Common myeloid progenitor, CD34-positive (primary cell): ENCODE measurements at regions of chr17 and their contacts with region 1.

Region 1: GRCh38 chr17:42536048-42536371 is at the start of gene NAGLU:
- DNase-seq: peak; percentile 86 to 91 (median 89)
- H3K4me3 ChIP-seq: peak within 1 kb of the TSS; percentile 70 to 81 (median 72)
- H3K27ac ChIP-seq: peak within 1 kb of the TSS; percentile 34 to 73
- H3K4me1 ChIP-seq: peaks cover 2 to 38% (median 30%) of the 10 kb centered on the region in 4 experiments
- H3K27me3 ChIP-seq: no peaks in the 10 kb centered on the region

Region 2: GRCh38 chr17:42548070-42548837 is 12.2 kb after region 1 on chr17:
- CTCF ChIA-PET with region 1: interaction called, 11 read pairs
- POLR2A ChIA-PET with region 1: no interaction called
- DNase-seq: peak; percentile 72 to 82 (median 74)
- H3K4me3 ChIP-seq: peak overlapping the region in 5 of 7 experiments; percentile 21 to 68 (median 59)
- H3K27ac ChIP-seq: no peak overlapping the region
- H3K4me1 ChIP-seq: peaks cover 0 to 9% (median 5%) of the 10 kb centered on the region in 4 experiments
- H3K27me3 ChIP-seq: no peaks in the 10 kb centered on the region

Region 3: GRCh38 chr17:42704837-42705494 is 169.0 kb after region 1 on chr17:
- CTCF ChIA-PET with region 1: no interaction called
- POLR2A ChIA-PET with region 1: no interaction called
- DNase-seq: no peak
- H3K4me3 ChIP-seq: no peak overlapping the region
- H3K27ac ChIP-seq: no peak overlapping the region
- H3K4me1 ChIP-seq: peaks cover 0 to 16% (median 5%) of the 10 kb centered on the region in 4 experiments
- H3K27me3 ChIP-seq: peaks cover 0 to 39% (median 4%) of the 10 kb centered on the region in 5 experiments

Region 4: GRCh38 chr17:42784811-42785592 is 249.0 kb after region 1 on chr17:
- CTCF ChIA-PET with region 1: no interaction called
- POLR2A ChIA-PET with region 1: no interaction called
- DNase-seq: peak in 2 of 3 donors; percentile 28 to 42
- H3K4me3 ChIP-seq: no peak overlapping the region
- H3K27ac ChIP-seq: no peak overlapping the region
- H3K4me1 ChIP-seq: peaks cover 0 to 36% (median 22%) of the 10 kb centered on the region in 4 experiments
- H3K27me3 ChIP-seq: peaks cover 6 to 89% (median 43%) of the 10 kb centered on the region in 5 experiments